ENCODE measurements at regions of chr2 and their contacts with region 1.

Region 1: GRCh38 chr2:197813093-197813787 is 8.8 kb downstream of the PLCL1 start:
- DNase-seq: no peak
- H3K4me3 ChIP-seq: no peak overlapping the region
- H3K4me3 Mint-ChIP-seq: no peak overlapping the region
- H3K27ac ChIP-seq: no peak overlapping the region
- H3K27ac Mint-ChIP-seq: no peak overlapping the region
- H3K4me1 ChIP-seq: peaks cover 34% of the 10 kb centered on the region
- H3K4me1 Mint-ChIP-seq: peaks cover 32 to 47% (median 36%) of the 10 kb centered on the region in 4 donors
- H3K27me3 ChIP-seq: no peaks in the 10 kb centered on the region
- H3K27me3 Mint-ChIP-seq: peaks cover 2% of the 10 kb centered on the region in 2 donors

Region 2: GRCh38 chr2:197828464-197829135 is 15.4 kb after region 1 on chr2:
- CTCF ChIA-PET with region 1: interaction called, 14 read pairs
- POLR2A ChIA-PET with region 1: interaction called, 3 read pairs
- intact Hi-C with region 1: no loop called
- DNase-seq: no peak
- H3K4me3 ChIP-seq: no peak overlapping the region
- H3K4me3 Mint-ChIP-seq: no peak overlapping the region
- H3K27ac ChIP-seq: no peak overlapping the region
- H3K27ac Mint-ChIP-seq: no peak overlapping the region
- H3K4me1 ChIP-seq: no peaks in the 10 kb centered on the region
- H3K4me1 Mint-ChIP-seq: peaks cover 1 to 13% (median 5%) of the 10 kb centered on the region in 4 donors
- H3K27me3 ChIP-seq: no peaks in the 10 kb centered on the region
- H3K27me3 Mint-ChIP-seq: no peaks in the 10 kb centered on the region

Region 3: DNA sequence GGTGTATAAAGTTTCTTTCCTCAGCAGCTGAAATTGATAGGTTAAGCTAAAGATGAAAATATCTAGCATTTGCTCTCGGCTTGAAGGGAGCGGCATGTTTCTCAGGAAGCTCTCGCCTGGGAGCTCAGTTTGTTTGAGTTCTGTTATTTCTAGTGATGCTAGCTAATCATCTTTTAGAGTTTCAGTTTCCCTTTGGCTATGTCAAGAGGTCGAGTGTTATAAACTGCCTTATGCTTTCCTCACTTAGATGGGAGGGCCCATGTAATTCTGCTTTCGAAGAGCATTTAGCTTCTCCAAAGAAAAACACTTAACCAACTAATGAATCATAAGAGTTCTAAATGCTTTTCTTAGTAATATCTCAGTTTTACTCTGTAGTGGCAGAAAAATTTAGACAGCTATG is 24.8 kb after region 1 on chr2:
- CTCF ChIA-PET with region 1: interaction called, 20 read pairs
- POLR2A ChIA-PET with region 1: no interaction called
- intact Hi-C with region 1: no loop called
- DNase-seq: peak; percentile 36 to 54 (median 39)
- H3K4me3 ChIP-seq: no peak overlapping the region
- H3K4me3 Mint-ChIP-seq: peak overlapping the region; percentile 70 to 92 (median 78)
- H3K27ac ChIP-seq: peak overlapping the region; percentile 50
- H3K27ac Mint-ChIP-seq: peak overlapping the region; percentile 87 to 94 (median 92)
- H3K4me1 ChIP-seq: peaks cover 45% of the 10 kb centered on the region
- H3K4me1 Mint-ChIP-seq: peaks cover 32 to 56% (median 48%) of the 10 kb centered on the region in 4 donors
- H3K27me3 ChIP-seq: no peaks in the 10 kb centered on the region
- H3K27me3 Mint-ChIP-seq: no peaks in the 10 kb centered on the region